Activated CD4-positive, alpha-beta memory T cell treated with anti-CD3 and anti-CD28 coated beads for 36 hours (primary cell): ENCODE measurements at regions of chr5 and their contacts with region 1.

Region 1: DNA sequence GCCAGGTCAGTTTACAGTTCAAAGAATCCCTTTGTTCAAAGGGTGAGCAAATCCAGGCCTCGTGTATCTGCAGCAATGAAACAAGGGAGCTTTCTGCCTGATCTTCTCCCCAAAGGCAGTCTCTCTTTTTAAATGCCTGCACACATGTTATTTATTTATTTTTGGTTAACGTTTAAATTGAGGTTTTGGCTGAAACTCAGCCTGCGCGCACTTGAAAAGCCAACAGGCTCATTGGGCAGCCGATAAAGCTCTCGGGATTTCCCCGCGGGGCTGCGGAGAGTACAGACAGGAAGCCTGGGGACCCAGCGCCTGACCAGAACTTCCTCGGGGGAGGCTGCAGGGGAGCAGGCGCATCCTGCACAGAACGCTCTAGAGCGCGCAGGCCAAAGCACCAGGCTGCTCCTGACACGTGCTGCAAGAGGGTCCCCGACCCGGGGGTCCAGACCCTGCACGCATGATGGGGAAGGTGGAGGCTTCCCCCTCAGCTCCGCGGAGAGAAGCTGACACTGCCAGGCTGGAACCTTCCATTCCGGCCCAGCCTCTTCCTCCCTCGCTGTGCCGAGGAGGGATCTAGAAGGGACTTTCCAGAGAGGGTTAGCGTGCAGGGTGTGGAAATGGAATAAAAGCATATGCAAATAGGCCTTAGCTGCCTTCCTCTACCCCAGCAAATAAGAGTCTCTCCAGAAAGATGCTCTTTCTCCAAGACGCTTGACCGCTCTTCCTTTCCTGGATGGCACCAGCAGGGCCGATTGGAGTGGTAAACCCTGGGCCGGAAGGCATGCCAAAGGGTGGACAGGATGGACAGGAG is 46.1 kb downstream of the PTTG1 start:
- DNase-seq: peak; percentile 91
- H3K4me3 Mint-ChIP-seq: peak overlapping the region; percentile 98
- H3K27ac Mint-ChIP-seq: peak overlapping the region; percentile 98
- H3K4me1 Mint-ChIP-seq: peaks cover 65% of the 10 kb centered on the region
- H3K27me3 Mint-ChIP-seq: no peaks in the 10 kb centered on the region

Region 2: DNA sequence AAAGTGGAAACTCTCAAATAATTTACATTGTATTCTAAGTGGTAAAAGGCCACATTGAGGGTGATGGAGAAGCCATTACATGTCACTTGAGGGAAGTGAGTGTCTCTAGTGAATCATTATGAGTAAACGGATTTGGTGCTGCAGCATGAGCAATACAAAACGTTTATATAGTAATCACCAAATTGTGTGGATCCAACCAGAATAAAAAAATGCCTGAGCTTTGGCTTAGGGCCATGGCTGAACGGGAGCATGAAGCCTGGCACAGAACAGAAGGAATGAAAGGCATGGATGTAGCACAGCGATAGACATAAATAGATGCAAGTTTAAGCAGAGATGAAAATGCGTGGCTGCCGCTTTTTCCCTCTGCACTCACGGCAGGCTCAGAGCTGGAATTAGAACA is 12.2 kb after region 1 on chr5:
- CTCF ChIA-PET with region 1: interaction called, 7 read pairs
- POLR2A ChIA-PET with region 1: interaction called, 30 read pairs
- intact Hi-C with region 1: loop called (anchors 1 kb)
- DNase-seq: no peak
- H3K4me3 Mint-ChIP-seq: peak overlapping the region; percentile 30
- H3K27ac Mint-ChIP-seq: peak overlapping the region; percentile 79
- H3K4me1 Mint-ChIP-seq: peaks cover 75% of the 10 kb centered on the region
- H3K27me3 Mint-ChIP-seq: no peaks in the 10 kb centered on the region

Region 3: GRCh38 chr5:160500786-160501779 is 33.3 kb after region 1 on chr5:
- CTCF ChIA-PET with region 1: interaction called, 34 read pairs
- POLR2A ChIA-PET with region 1: interaction called, 24 read pairs
- intact Hi-C with region 1: loop called (anchors 1 kb)
- DNase-seq: no peak
- H3K4me3 Mint-ChIP-seq: no peak overlapping the region
- H3K27ac Mint-ChIP-seq: no peak overlapping the region
- H3K4me1 Mint-ChIP-seq: peaks cover 17% of the 10 kb centered on the region
- H3K27me3 Mint-ChIP-seq: no peaks in the 10 kb centered on the region

Region 4: GRCh38 chr5:160649304-160649703 is 181.5 kb after region 1 on chr5:
- CTCF ChIA-PET with region 1: no interaction called
- POLR2A ChIA-PET with region 1: no interaction called
- intact Hi-C with region 1: no loop called
- DNase-seq: no peak
- H3K4me3 Mint-ChIP-seq: no peak overlapping the region
- H3K27ac Mint-ChIP-seq: no peak overlapping the region
- H3K4me1 Mint-ChIP-seq: no peaks in the 10 kb centered on the region
- H3K27me3 Mint-ChIP-seq: peaks cover 2% of the 10 kb centered on the region

Region 5: GRCh38 chr5:160824301-160825001 is 356.7 kb after region 1 on chr5:
- CTCF ChIA-PET with region 1: no interaction called
- POLR2A ChIA-PET with region 1: no interaction called
- intact Hi-C with region 1: no loop called
- DNase-seq: no peak
- H3K4me3 Mint-ChIP-seq: no peak overlapping the region
- H3K27ac Mint-ChIP-seq: no peak overlapping the region
- H3K4me1 Mint-ChIP-seq: no peaks in the 10 kb centered on the region
- H3K27me3 Mint-ChIP-seq: no peaks in the 10 kb centered on the region

Region 6: GRCh38 chr5:160899735-160900134 is 432.0 kb after region 1 on chr5:
- CTCF ChIA-PET with region 1: no interaction called
- POLR2A ChIA-PET with region 1: no interaction called
- intact Hi-C with region 1: no loop called
- DNase-seq: no peak
- H3K4me3 Mint-ChIP-seq: no peak overlapping the region
- H3K27ac Mint-ChIP-seq: no peak overlapping the region
- H3K4me1 Mint-ChIP-seq: no peaks in the 10 kb centered on the region
- H3K27me3 Mint-ChIP-seq: peaks cover 2% of the 10 kb centered on the region